Activated T-helper 2 cell treated with anti-CD3 and anti-CD28 coated beads, Interferon-gamma antibody, Interleukin-2, Interleukin-4, amounts not matched to agents 10 μg/mL and 5 μg/mL and 100 μg/mL, durations not matched to agents 14 hours and 24 hours and 36 hours (primary cell): ENCODE measurements at regions of chr15 and their contacts with region 1.

Region 1: GRCh38 chr15:88467073-88467934 is at the starts of genes MRPL46 and MRPS11:
- DNase-seq: peak; percentile 86
- H3K4me3 Mint-ChIP-seq: peak within 1 kb of the TSS; percentile 96
- H3K27ac Mint-ChIP-seq: peak within 1 kb of the TSS; percentile 94
- H3K4me1 Mint-ChIP-seq: peaks cover 26% of the 10 kb centered on the region
- H3K27me3 Mint-ChIP-seq: no peaks in the 10 kb centered on the region
- total RNA-seq, gene MRPL46: 39.8 and 42.4 TPM in 2 replicates
- total RNA-seq, gene MRPS11: 69.5 and 71.0 TPM in 2 replicates

Region 2: GRCh38 chr15:88419830-88420229 is 47.5 kb before region 1 on chr15:
- intact Hi-C with region 1: loop called (anchors 1 kb)
- DNase-seq: no peak
- H3K4me3 Mint-ChIP-seq: no peak overlapping the region
- H3K27ac Mint-ChIP-seq: no peak overlapping the region
- H3K4me1 Mint-ChIP-seq: peaks cover 16% of the 10 kb centered on the region
- H3K27me3 Mint-ChIP-seq: peaks cover 16% of the 10 kb centered on the region

Region 3: GRCh38 chr15:88546248-88547129 is 79.2 kb after region 1 on chr15 and contains the start of gene DET1:
- intact Hi-C with region 1: loop called (anchors 1 kb)
- DNase-seq: peak; percentile 92
- H3K4me3 Mint-ChIP-seq: peak within 1 kb of the TSS; percentile 87
- H3K27ac Mint-ChIP-seq: peak within 1 kb of the TSS; percentile 85
- H3K4me1 Mint-ChIP-seq: peaks cover 8% of the 10 kb centered on the region
- H3K27me3 Mint-ChIP-seq: no peaks in the 10 kb centered on the region
- total RNA-seq, gene DET1: 1.5 and 2.6 TPM in 2 replicates

Region 4: GRCh38 chr15:88638626-88639372 is 171.5 kb after region 1 on chr15 and contains the start of gene ISG20:
- intact Hi-C with region 1: loop called (anchors 1 kb)
- DNase-seq: peak; percentile 96
- H3K4me3 Mint-ChIP-seq: peak within 1 kb of the TSS; percentile 85
- H3K27ac Mint-ChIP-seq: peak within 1 kb of the TSS; percentile 94
- H3K4me1 Mint-ChIP-seq: peaks cover 60% of the 10 kb centered on the region
- H3K27me3 Mint-ChIP-seq: no peaks in the 10 kb centered on the region
- total RNA-seq, gene ISG20: 36.3 and 38.0 TPM in 2 replicates